ENCODE measurements at regions of chr5 and their contacts with region 1.

Region 1: DNA sequence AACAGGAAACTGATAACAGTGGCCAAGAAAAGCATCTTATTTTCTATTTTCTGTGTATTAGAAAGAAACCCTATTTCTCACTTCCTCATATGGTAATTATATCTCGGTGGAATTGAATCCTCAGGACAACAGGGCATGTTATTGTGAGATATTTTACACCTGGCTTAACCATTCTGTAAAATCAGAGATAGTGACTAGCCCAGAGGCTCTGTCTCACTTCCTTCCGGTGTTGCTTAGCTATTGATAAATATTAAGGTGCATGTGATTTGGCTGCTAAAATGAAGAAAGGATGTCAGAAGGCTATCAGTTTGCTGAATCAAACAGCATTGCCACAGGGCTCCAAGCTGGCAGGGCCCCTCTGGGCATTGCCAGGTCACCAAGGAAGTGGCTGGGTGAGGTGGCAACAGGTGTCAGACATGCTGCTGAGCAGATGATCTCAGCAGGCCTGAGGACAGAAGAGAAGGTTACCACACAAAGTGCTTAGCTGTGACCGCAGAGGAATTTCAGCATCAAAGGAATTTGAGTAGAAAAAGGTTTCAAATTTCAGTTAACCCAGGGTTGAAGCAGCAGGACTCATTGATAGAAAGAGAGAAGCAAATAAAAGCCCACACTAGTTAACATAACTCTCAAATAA is 330.7 kb downstream of the PDE4D start:
- DNase-seq: peak; percentile 82
- H3K4me3 ChIP-seq: peak overlapping the region; percentile 27
- H3K27ac ChIP-seq: peak overlapping the region; percentile 84
- H3K4me1 ChIP-seq: peaks cover 60% of the 10 kb centered on the region
- CTCF ChIP-seq: no peak

Region 2: DNA sequence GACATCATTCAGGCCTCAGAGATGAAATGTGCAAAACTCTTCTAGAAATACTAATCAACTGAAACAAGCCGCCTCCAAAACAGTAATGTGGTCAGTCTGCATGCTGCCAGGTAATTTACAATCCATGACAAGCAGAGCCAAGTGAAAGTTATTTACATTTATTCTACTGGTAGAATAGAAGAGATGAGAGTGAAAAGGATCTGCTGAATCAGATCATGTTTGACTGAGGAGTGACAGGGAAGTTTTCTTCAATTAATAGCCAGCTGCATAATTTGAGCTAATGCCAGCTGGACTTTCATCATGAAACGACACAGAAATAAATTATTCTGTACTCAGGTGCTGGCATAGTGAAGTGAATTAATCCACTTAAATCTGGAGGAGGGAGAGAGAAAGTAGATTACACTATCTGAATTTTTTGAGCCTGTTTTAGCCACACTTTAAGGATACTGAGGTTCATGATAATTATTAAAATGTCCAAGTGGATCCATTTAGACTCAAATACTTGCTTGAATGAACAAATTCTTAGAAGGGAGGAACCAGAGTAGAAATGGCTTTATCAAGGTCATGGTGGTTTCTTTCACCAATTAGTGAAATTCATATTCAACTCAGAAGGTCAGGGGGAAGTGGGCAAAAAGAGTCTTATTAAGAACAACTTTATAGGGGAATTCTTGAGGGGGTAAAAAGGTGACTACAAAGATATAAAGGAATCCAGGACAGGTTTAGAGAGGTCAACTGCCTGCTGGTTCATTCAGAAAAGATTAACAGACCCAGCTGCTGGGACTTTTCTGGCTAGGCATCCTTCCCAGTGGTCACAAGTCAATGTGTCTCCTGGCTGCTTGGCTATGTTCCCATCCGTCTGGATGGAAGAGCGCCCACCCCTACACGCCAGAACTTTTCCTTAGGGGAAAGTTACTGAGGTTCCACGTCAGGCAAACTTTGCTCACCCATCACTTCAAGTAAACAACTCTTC is 19.7 kb before region 1 on chr5:
- CTCF ChIA-PET with region 1: no interaction called
- POLR2A ChIA-PET with region 1: interaction called, 14 read pairs
- intact Hi-C with region 1: no loop called
- DNase-seq: no peak
- H3K4me3 ChIP-seq: no peak overlapping the region
- H3K27ac ChIP-seq: no peak overlapping the region
- H3K4me1 ChIP-seq: no peaks in the 10 kb centered on the region
- CTCF ChIP-seq: no peak

Measured in OCI-LY7 (cell line).